Left colon (tissue), 2 donors: ENCODE measurements at regions of chr10 and their contacts with region 1.

Region 1: DNA sequence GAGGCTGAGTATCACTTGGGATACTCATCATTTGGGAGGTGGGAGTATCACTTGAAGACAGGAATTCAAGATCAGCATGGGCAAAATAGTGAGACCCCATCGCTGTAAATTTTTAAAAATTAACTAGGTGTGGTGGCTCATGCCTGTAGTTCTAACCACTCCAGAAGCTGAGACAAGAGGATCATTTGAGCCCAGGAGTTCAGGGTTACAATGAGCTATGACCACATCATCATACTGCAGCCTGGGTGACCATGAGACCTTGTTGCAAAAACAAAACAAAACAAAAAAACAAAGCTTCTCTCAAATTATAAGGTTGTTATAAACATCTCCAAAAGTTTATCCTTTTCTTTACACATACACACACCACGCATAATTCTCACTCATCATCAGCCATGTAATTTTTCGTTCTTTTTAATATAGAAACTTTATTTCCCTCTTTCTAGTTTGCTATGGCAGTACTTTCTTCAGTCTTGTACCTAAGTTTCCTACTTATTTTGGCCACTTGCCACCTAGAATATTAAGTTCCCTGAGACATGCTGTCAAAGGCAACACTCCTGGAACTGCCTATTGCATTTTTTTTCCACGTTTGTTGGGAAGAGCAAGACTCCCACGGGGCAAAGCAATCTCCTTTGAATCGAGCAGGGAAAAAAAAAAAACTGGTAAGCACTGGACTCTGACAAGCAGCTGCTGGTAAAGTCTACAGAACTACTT is 37.1 kb downstream of the SKIDA1 start:
- DNase-seq: no peak
- ATAC-seq: no peak

Region 2: GRCh38 chr10:21285742-21286331 is 202.6 kb before region 1 on chr10:
- intact Hi-C with region 1: loop called in 1 of 2 experiments (anchors 10 kb)
- DNase-seq: no peak
- ATAC-seq: no peak

Region 3: GRCh38 chr10:21771219-21771618 is 282.8 kb after region 1 on chr10:
- intact Hi-C with region 1: no loop called
- DNase-seq: no peak
- ATAC-seq: no peak